A673 (cell line): ENCODE measurements at regions of chr12 and their contacts with region 1.

Region 1: DNA sequence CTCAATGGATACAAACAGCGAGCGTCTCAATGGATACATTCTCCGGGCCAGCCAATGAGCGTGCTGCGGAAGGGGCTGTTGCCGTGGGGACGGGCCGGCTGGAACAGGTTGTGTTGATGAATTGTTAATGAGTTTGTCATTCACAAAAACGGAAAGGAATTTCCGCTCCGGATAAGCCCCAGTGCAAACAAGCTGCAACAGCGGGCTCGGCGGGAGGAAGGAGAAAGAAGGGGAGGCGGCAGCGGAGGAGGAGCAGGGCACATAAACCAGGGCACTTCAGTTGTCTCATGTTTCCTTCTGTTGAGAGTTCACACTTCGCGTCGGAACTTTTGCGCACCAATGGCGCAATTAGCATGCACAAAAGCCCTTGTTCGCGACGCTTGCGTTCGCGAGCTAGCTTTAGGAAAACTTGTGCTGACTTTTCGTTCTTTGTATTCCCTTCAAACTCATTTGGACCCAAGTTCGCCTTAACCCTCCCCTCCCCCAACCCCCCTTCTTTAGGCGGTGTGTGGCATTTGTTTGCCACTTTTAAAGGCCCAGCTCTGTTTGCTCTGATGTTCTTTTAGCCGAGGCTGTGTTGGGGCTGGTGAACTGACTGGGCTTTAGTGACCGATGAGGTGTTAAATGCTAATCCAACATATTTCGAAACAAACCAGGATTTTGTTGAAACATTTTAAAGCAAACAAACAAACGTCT is at the start of gene DUSP6:
- DNase-seq: peak; percentile 100
- H3K4me3 ChIP-seq: peak within 1 kb of the TSS; percentile 68
- H3K27ac ChIP-seq: peak within 1 kb of the TSS; percentile 99
- H3K4me1 ChIP-seq: peaks cover 29% of the 10 kb centered on the region
- H3K27me3 ChIP-seq: no peaks in the 10 kb centered on the region
- CTCF ChIP-seq: no peak
- total RNA-seq, gene DUSP6: 207 and 226 TPM in 2 replicates

Region 2: GRCh38 chr12:89373763-89374572 is 21.3 kb after region 1 on chr12:
- CTCF ChIA-PET with region 1: no interaction called
- POLR2A ChIA-PET with region 1: no interaction called
- intact Hi-C with region 1: no loop called
- DNase-seq: peak; percentile 95
- H3K4me3 ChIP-seq: peak overlapping the region; percentile 10
- H3K27ac ChIP-seq: peak overlapping the region; percentile 85
- H3K4me1 ChIP-seq: peaks cover 69% of the 10 kb centered on the region
- H3K27me3 ChIP-seq: no peaks in the 10 kb centered on the region
- CTCF ChIP-seq: no peak

Region 3: GRCh38 chr12:89384050-89384758 is 31.6 kb after region 1 on chr12:
- CTCF ChIA-PET with region 1: no interaction called
- POLR2A ChIA-PET with region 1: interaction called, 3 read pairs
- intact Hi-C with region 1: loop called (anchors 2 kb)
- DNase-seq: peak; percentile 93
- H3K4me3 ChIP-seq: peak overlapping the region; percentile 9
- H3K27ac ChIP-seq: peak overlapping the region; percentile 92
- H3K4me1 ChIP-seq: peaks cover 65% of the 10 kb centered on the region
- H3K27me3 ChIP-seq: no peaks in the 10 kb centered on the region
- CTCF ChIP-seq: no peak

Region 4: DNA sequence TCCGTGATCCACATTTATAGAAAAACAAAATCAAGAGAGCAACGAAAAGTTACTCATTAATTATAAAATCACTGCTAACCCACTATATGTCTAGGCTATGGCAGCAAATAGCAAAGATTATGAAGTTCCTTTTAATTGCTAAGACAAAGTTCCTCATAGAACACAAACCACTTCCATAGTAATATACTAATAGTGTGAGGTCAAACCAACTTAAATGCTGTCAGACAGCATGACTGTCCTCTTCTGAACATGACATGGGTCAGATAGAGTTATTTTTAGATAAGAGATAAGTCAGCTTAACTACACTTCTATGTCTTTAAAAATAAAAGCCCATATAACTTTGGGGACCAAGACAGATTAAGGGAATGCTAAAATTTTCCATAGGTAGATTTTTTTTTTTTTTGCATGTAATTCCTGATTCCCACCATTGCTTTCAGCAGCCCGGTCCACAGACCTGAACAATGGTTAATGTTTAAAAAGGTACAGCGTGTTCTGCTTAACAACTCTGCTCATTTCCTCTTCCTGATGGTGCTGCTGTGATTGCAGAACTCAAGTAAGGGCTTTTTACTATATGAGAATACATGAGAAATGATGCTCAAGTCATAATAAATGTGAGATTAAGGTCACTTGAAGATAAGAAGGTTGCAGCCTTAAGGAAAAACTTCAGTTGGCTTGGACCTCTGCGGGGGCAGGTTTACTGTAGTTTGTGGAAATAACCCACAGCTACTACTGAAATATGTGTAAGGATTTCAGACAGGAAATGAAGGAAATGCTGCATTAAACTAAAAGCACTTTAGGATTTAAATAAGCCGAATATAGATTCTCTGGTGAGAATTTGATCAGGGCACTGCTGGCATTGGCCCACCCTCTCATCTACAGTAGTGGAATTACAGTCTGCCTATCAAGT is 37.4 kb after region 1 on chr12:
- CTCF ChIA-PET with region 1: no interaction called
- POLR2A ChIA-PET with region 1: interaction called, 6 read pairs
- intact Hi-C with region 1: loop called (anchors 1 kb)
- DNase-seq: peak; percentile 96
- H3K4me3 ChIP-seq: no peak overlapping the region
- H3K27ac ChIP-seq: peak overlapping the region; percentile 88
- H3K4me1 ChIP-seq: peaks cover 76% of the 10 kb centered on the region
- H3K27me3 ChIP-seq: no peaks in the 10 kb centered on the region
- CTCF ChIP-seq: no peak

Region 5: DNA sequence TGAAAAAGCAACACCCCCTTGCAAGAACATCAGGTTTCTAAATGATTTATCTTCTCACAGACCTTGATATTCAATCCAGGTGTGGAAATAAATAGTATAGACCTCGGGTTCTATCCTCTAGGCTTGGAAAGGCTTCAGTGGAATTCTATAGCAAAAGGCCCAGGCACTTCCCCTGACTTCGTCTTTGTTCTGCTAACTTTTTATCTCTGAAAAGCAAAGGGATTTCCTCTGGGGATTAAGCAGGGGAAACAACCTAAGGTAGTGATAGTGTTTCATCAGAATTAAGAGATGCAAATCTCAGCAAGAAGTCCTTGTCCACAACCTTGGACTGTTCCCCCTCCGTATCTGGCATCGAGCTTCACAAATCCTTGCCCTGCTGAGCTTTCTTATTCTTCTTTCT is 59.2 kb after region 1 on chr12:
- CTCF ChIA-PET with region 1: no interaction called
- POLR2A ChIA-PET with region 1: no interaction called
- intact Hi-C with region 1: loop called (anchors 2 kb)
- DNase-seq: peak; percentile 67
- H3K4me3 ChIP-seq: no peak overlapping the region
- H3K27ac ChIP-seq: peak overlapping the region; percentile 56
- H3K4me1 ChIP-seq: peaks cover 34% of the 10 kb centered on the region
- H3K27me3 ChIP-seq: no peaks in the 10 kb centered on the region
- CTCF ChIP-seq: no peak

Region 6: GRCh38 chr12:89451841-89452251 is 99.2 kb after region 1 on chr12:
- CTCF ChIA-PET with region 1: no interaction called
- POLR2A ChIA-PET with region 1: interaction called, 10 read pairs
- intact Hi-C with region 1: loop called (anchors 1 kb)
- DNase-seq: peak; percentile 96
- H3K4me3 ChIP-seq: peak overlapping the region; percentile 11
- H3K27ac ChIP-seq: peak overlapping the region; percentile 97
- H3K4me1 ChIP-seq: peaks cover 80% of the 10 kb centered on the region
- H3K27me3 ChIP-seq: no peaks in the 10 kb centered on the region
- CTCF ChIP-seq: no peak

Region 7: GRCh38 chr12:89461649-89462612 is 109.3 kb after region 1 on chr12:
- CTCF ChIA-PET with region 1: interaction called, 6 read pairs
- POLR2A ChIA-PET with region 1: no interaction called
- intact Hi-C with region 1: loop called (anchors 2 kb)
- DNase-seq: peak; percentile 91
- H3K4me3 ChIP-seq: peak overlapping the region; percentile 18
- H3K27ac ChIP-seq: peak overlapping the region; percentile 88
- H3K4me1 ChIP-seq: peaks cover 77% of the 10 kb centered on the region
- H3K27me3 ChIP-seq: no peaks in the 10 kb centered on the region
- CTCF ChIP-seq: peak; percentile 66